ENCODE measurements at regions of chr5 and their contacts with region 1.

Region 1: GRCh38 chr5:10627160-10627701 is 63.4 kb downstream of the ANKRD33B start:
- DNase-seq: no peak
- H3K4me3 ChIP-seq: no peak overlapping the region
- H3K4me3 Mint-ChIP-seq: peak overlapping the region; percentile 42
- H3K27ac Mint-ChIP-seq: peak overlapping the region; percentile 56
- H3K4me1 ChIP-seq: peaks cover 5% of the 10 kb centered on the region; the same call in 1 of the 2 replicates
- H3K4me1 Mint-ChIP-seq: no peaks in the 10 kb centered on the region
- H3K27me3 ChIP-seq: no peaks in the 10 kb centered on the region
- H3K27me3 Mint-ChIP-seq: no peaks in the 10 kb centered on the region
- CTCF ChIP-seq: no peak

Region 2: DNA sequence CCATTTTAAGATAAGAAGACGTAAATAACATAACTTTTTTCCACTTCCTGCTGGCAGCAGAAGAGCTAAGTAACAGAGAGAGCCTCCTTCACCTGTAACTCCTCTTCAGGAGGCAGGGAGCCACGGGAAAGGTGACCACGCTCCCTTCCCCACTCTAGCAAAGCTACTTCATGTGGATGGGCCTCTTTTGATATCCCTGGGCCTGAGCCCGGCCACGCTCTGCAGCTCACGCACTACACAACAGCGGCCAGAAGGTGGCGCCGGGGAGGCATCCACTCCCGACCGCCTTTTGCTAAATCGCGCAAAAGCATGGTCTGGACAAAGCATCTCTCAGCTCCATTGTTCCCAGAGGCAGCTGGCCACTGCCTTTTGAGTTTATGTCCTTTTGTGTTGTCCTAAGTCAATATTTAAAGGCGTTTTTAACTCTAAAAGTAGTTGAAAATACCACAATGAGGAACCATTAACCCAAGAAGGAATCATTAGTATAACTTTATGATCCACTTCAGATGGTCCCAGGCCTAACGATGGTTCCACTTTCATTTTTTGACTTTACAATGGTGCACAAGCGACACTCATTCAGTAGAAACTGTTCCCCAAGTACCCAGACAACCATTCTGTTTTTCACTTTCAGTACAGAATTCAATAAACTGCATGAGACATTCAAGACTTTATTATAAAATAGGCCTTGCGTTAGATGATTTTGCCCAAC is 343.1 kb before region 1 on chr5:
- CTCF ChIA-PET with region 1: no interaction called
- POLR2A ChIA-PET with region 1: no interaction called
- intact Hi-C with region 1: loop called (anchors 1 kb)
- DNase-seq: peak; percentile 75 to 82
- H3K4me3 ChIP-seq: no peak overlapping the region
- H3K4me3 Mint-ChIP-seq: no peak overlapping the region
- H3K27ac Mint-ChIP-seq: no peak overlapping the region
- H3K4me1 ChIP-seq: no peaks in the 10 kb centered on the region
- H3K4me1 Mint-ChIP-seq: no peaks in the 10 kb centered on the region
- H3K27me3 ChIP-seq: no peaks in the 10 kb centered on the region
- H3K27me3 Mint-ChIP-seq: no peaks in the 10 kb centered on the region
- CTCF ChIP-seq: peak; percentile 79 to 81

Region 3: DNA sequence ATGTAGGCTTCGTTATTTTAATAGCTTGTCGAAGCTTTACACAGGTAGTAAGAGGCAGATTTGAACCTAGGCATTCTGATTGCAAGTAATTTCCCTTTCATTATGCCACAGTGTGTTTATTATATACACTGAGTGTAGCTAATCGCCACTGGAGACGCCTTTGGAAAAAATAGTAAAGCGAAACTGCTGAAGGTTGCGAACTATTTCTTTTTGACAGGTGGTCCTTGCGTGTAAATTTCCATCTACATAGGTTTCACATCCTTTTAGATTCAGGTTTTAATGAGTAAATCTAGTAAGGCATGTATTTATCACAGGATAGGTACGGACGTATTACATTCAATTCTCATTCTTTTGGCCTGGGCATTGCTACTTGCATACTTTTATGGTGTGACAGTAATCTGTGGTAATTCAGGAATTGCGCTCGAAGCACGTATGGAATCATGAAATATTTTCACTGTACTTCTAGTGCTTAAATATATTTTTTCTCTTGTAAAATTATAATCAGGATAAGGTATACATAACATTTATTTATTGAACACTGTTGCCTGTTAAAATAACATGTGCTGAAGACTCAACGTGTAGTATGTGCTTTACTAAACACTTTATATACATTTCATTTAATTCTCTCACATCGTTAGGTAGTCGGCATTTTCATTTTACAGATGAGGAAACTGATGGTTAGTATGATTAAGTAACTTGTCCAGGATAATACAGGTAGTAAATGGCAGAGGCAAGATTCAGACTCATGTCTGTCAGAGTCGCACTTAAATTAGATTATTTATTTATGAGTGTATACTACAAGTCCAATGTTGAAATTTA is 272.0 kb before region 1 on chr5:
- CTCF ChIA-PET with region 1: no interaction called
- POLR2A ChIA-PET with region 1: no interaction called
- intact Hi-C with region 1: no loop called
- DNase-seq: no peak
- H3K4me3 ChIP-seq: peak overlapping the region; percentile 78
- H3K4me3 Mint-ChIP-seq: peak overlapping the region; percentile 97
- H3K27ac Mint-ChIP-seq: peak overlapping the region; percentile 99
- H3K4me1 ChIP-seq: peaks cover 7% of the 10 kb centered on the region; the same call in 1 of the 2 replicates
- H3K4me1 Mint-ChIP-seq: peaks cover 7% of the 10 kb centered on the region
- H3K27me3 ChIP-seq: no peaks in the 10 kb centered on the region
- H3K27me3 Mint-ChIP-seq: no peaks in the 10 kb centered on the region
- CTCF ChIP-seq: no peak

Region 4: GRCh38 chr5:10452768-10453331 is 174.4 kb before region 1 on chr5:
- CTCF ChIA-PET with region 1: interaction called, 25 read pairs
- POLR2A ChIA-PET with region 1: no interaction called
- intact Hi-C with region 1: loop called (anchors 1 kb)
- DNase-seq: peak; percentile 55 to 69
- H3K4me3 ChIP-seq: no peak overlapping the region
- H3K4me3 Mint-ChIP-seq: no peak overlapping the region
- H3K27ac Mint-ChIP-seq: no peak overlapping the region
- H3K4me1 ChIP-seq: peaks cover 11% of the 10 kb centered on the region
- H3K4me1 Mint-ChIP-seq: no peaks in the 10 kb centered on the region
- H3K27me3 ChIP-seq: no peaks in the 10 kb centered on the region
- H3K27me3 Mint-ChIP-seq: no peaks in the 10 kb centered on the region
- CTCF ChIP-seq: peak; percentile 67 to 79

Region 5: GRCh38 chr5:10552183-10553143 is 74.8 kb before region 1 on chr5:
- CTCF ChIA-PET with region 1: interaction called, 9 read pairs
- POLR2A ChIA-PET with region 1: no interaction called
- intact Hi-C with region 1: loop called (anchors 5 kb)
- DNase-seq: no peak
- H3K4me3 ChIP-seq: no peak overlapping the region
- H3K4me3 Mint-ChIP-seq: peak overlapping the region; percentile 56
- H3K27ac Mint-ChIP-seq: peak overlapping the region; percentile 97
- H3K4me1 ChIP-seq: peaks cover 56% of the 10 kb centered on the region
- H3K4me1 Mint-ChIP-seq: peaks cover 57% of the 10 kb centered on the region
- H3K27me3 ChIP-seq: no peaks in the 10 kb centered on the region
- H3K27me3 Mint-ChIP-seq: no peaks in the 10 kb centered on the region
- CTCF ChIP-seq: no peak

Region 6: GRCh38 chr5:10563945-10564837 is 63.0 kb before region 1 on chr5 and contains the start of gene ANKRD33B:
- CTCF ChIA-PET with region 1: interaction called, 5 read pairs
- POLR2A ChIA-PET with region 1: no interaction called
- intact Hi-C with region 1: loop called (anchors 1 kb)
- DNase-seq: peak; percentile 82 to 86
- H3K4me3 ChIP-seq: peak within 1 kb of the TSS; percentile 77
- H3K4me3 Mint-ChIP-seq: peak within 1 kb of the TSS; percentile 90
- H3K27ac Mint-ChIP-seq: peak within 1 kb of the TSS; percentile 10
- H3K4me1 ChIP-seq: peaks cover 50% of the 10 kb centered on the region
- H3K4me1 Mint-ChIP-seq: peaks cover 27% of the 10 kb centered on the region
- H3K27me3 ChIP-seq: no peaks in the 10 kb centered on the region
- H3K27me3 Mint-ChIP-seq: no peaks in the 10 kb centered on the region
- CTCF ChIP-seq: no peak
- total RNA-seq, gene ANKRD33B: 22.8 and 25.3 TPM in 2 replicates